ENCODE measurements at regions of chr6 and their contacts with region 1.

Region 1: GRCh38 chr6:143677891-143678791 is at the start of gene PHACTR2:
- DNase-seq: peak; percentile 82
- H3K4me3 ChIP-seq: peak within 1 kb of the TSS; percentile 32 to 89 (median 80)
- H3K27ac ChIP-seq: peak within 1 kb of the TSS; percentile 91
- H3K4me1 ChIP-seq: peaks cover 38% of the 10 kb centered on the region
- H3K27me3 ChIP-seq: no peaks in the 10 kb centered on the region
- CTCF ChIP-seq: no peak
- POLR2A ChIP-seq: peak; percentile 94
- total RNA-seq, gene PHACTR2: 160 and 178 TPM in 2 replicates

Region 2: GRCh38 chr6:143205991-143206390 is 472.1 kb before region 1 on chr6:
- CTCF ChIA-PET with region 1: no interaction called
- POLR2A ChIA-PET with region 1: no interaction called
- dilution Hi-C with region 1: no loop called
- intact Hi-C with region 1: no loop called
- DNase-seq: no peak
- H3K4me3 ChIP-seq: no peak overlapping the region
- H3K27ac ChIP-seq: no peak overlapping the region
- H3K4me1 ChIP-seq: no peaks in the 10 kb centered on the region
- H3K27me3 ChIP-seq: no peaks in the 10 kb centered on the region
- CTCF ChIP-seq: no peak
- POLR2A ChIP-seq: no peak

Region 3: DNA sequence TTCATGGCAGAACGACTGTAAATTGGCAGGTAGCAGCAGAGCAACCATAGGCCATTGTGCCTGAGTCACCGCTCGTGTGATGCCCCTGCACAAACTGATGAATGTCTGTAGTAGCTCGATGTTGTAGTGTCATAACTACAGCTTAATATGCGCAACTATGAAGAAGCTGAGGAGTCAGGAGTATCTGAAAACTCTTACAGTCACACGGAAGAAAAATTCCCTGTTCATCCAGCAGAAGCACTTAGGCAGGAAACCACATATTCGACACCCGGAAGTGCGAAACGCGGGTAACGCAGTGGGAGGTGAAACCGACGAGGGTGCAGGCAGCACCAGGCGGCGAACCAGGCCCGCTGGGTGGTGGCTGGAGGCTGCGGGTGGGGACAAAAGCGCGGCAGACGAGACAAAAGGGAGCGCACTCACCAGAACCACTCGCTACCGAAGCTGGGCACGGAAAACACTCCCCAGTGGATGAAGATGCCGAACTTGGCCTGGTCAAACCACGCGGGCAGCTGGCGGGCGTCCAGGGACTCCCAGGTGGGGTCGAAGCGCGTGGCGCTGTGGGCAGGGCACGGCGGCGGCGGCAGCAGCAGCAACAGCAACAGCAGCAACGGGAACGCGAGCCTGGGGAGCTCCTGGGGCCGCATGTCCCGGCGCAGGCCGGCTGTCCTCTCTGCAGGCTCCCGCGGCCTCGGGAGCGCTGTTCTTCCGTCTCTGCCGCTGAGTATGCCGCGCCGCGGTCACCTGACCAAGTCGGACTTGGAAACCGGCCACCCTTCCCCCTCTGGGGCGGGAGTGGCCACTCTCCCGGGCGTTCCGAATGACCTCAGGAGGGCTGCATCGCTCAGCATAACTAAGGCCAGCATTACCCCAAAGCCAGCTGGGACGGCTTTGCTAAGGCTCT is 166.9 kb before region 1 on chr6 and contains the start of gene FUCA2:
- CTCF ChIA-PET with region 1: no interaction called
- POLR2A ChIA-PET with region 1: no interaction called
- dilution Hi-C with region 1: no loop called
- intact Hi-C with region 1: loop called (anchors 5 kb)
- DNase-seq: peak; percentile 81
- H3K4me3 ChIP-seq: peak within 1 kb of the TSS; percentile 48 to 82 (median 53)
- H3K27ac ChIP-seq: peak within 1 kb of the TSS; percentile 69
- H3K4me1 ChIP-seq: peaks cover 18% of the 10 kb centered on the region
- H3K27me3 ChIP-seq: peaks cover 6 to 12% of the 10 kb centered on the region in 2 experiments
- CTCF ChIP-seq: peak in 1 of 2 donors; percentile 14
- POLR2A ChIP-seq: peak; percentile 88
- total RNA-seq, gene FUCA2: 80.9 and 85.0 TPM in 2 replicates

Region 4: GRCh38 chr6:143536865-143537691 is 141.1 kb before region 1 on chr6:
- CTCF ChIA-PET with region 1: no interaction called
- POLR2A ChIA-PET with region 1: no interaction called
- dilution Hi-C with region 1: no loop called
- intact Hi-C with region 1: no loop called
- DNase-seq: peak; percentile 61
- H3K4me3 ChIP-seq: peak overlapping the region; percentile 18 to 38 (median 30)
- H3K27ac ChIP-seq: no peak overlapping the region
- H3K4me1 ChIP-seq: no peaks in the 10 kb centered on the region
- H3K27me3 ChIP-seq: peaks cover 5% of the 10 kb centered on the region in 2 experiments
- CTCF ChIP-seq: peak; percentile 27 to 65
- POLR2A ChIP-seq: no peak

Region 5: DNA sequence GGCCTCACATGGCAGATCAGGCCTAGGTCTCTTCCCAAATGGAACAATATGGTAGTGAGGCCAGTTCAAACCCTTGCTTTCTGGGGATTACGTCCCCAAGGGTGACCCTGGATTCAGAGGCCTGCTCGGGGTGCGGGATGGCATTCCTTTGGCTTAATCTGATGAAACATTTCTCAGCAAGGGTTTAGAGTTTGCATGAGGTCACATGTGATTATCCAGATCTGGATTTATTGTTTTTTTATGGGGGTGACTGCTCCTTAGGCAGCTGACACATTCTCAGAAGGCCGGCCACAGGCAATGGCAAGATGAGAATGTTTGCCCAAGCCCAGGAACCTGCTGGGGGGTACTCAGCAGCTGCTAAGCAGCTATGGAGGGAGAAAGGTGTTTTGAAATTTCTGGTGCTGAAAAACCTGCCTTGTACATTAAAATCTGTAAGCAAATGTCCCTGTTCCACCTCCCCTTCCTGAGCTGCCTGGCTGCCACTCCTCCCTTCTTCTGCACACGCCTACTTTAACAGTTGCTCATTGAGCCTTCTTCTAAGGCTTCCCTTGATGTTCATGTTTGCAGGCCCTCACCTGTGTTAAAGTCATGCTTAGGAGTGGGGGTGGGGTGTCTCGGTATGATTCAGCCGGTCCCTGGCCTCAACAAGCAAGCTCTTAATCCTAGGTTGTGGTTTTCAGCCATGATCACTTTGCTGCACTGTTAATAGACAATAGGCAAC is 128.8 kb before region 1 on chr6:
- CTCF ChIA-PET with region 1: no interaction called
- POLR2A ChIA-PET with region 1: no interaction called
- dilution Hi-C with region 1: no loop called
- intact Hi-C with region 1: no loop called
- DNase-seq: no peak
- H3K4me3 ChIP-seq: no peak overlapping the region
- H3K27ac ChIP-seq: no peak overlapping the region
- H3K4me1 ChIP-seq: peaks cover under 1% of the 10 kb centered on the region
- H3K27me3 ChIP-seq: no peaks in the 10 kb centered on the region
- CTCF ChIP-seq: no peak
- POLR2A ChIP-seq: no peak

Region 6: GRCh38 chr6:143607974-143608373 is 70.2 kb before region 1 on chr6:
- CTCF ChIA-PET with region 1: no interaction called
- POLR2A ChIA-PET with region 1: no interaction called
- dilution Hi-C with region 1: no loop called
- intact Hi-C with region 1: loop called (anchors 2 kb)
- DNase-seq: no peak
- H3K4me3 ChIP-seq: no peak overlapping the region
- H3K27ac ChIP-seq: no peak overlapping the region
- H3K4me1 ChIP-seq: peaks cover 12% of the 10 kb centered on the region
- H3K27me3 ChIP-seq: no peaks in the 10 kb centered on the region
- CTCF ChIP-seq: no peak
- POLR2A ChIP-seq: no peak

Region 7: DNA sequence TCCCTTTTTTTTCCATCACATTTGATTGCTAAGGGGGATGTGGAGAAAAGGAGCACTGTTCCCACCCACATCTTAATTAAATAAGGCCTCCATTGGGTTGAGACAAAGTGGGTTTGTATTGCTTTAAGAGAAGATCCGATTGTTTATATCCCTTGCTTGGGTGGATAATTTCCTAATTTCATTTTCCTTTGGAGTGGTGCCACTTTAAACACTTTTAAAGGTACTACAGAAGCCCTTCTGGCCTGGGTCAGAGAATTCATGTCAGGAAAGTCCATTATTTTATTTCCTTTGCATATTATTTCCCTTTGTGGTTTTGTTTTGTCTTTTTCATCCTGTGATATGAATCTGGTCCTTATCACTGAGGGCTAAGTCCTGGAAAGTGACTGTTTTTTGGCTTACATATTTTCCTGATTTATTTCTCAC is 56.5 kb after region 1 on chr6:
- CTCF ChIA-PET with region 1: no interaction called
- POLR2A ChIA-PET with region 1: no interaction called
- dilution Hi-C with region 1: no loop called
- intact Hi-C with region 1: loop called (anchors 2 kb)
- DNase-seq: peak; percentile 82
- H3K4me3 ChIP-seq: no peak overlapping the region
- H3K27ac ChIP-seq: no peak overlapping the region
- H3K4me1 ChIP-seq: peaks cover 24% of the 10 kb centered on the region
- H3K27me3 ChIP-seq: no peaks in the 10 kb centered on the region
- CTCF ChIP-seq: no peak
- POLR2A ChIP-seq: peak; percentile 57

Region 8: GRCh38 chr6:143842902-143843676 is 164.9 kb after region 1 on chr6 and contains the start of gene LTV1:
- CTCF ChIA-PET with region 1: no interaction called
- POLR2A ChIA-PET with region 1: interaction called, 4 read pairs
- dilution Hi-C with region 1: no loop called
- intact Hi-C with region 1: loop called (anchors 2 kb)
- DNase-seq: peak; percentile 97
- H3K4me3 ChIP-seq: peak within 1 kb of the TSS; percentile 46 to 82 (median 49)
- H3K27ac ChIP-seq: peak within 1 kb of the TSS; percentile 90
- H3K4me1 ChIP-seq: peaks cover 9% of the 10 kb centered on the region
- H3K27me3 ChIP-seq: no peaks in the 10 kb centered on the region
- CTCF ChIP-seq: no peak
- POLR2A ChIP-seq: peak; percentile 92
- total RNA-seq, gene LTV1: 26.6 and 26.9 TPM in 2 replicates